Activated CD8-positive, alpha-beta T cell treated with anti-CD3 and anti-CD28 coated beads for 36 hours (primary cell): ENCODE measurements at regions of chr6 and their contacts with region 1.

Region 1: DNA sequence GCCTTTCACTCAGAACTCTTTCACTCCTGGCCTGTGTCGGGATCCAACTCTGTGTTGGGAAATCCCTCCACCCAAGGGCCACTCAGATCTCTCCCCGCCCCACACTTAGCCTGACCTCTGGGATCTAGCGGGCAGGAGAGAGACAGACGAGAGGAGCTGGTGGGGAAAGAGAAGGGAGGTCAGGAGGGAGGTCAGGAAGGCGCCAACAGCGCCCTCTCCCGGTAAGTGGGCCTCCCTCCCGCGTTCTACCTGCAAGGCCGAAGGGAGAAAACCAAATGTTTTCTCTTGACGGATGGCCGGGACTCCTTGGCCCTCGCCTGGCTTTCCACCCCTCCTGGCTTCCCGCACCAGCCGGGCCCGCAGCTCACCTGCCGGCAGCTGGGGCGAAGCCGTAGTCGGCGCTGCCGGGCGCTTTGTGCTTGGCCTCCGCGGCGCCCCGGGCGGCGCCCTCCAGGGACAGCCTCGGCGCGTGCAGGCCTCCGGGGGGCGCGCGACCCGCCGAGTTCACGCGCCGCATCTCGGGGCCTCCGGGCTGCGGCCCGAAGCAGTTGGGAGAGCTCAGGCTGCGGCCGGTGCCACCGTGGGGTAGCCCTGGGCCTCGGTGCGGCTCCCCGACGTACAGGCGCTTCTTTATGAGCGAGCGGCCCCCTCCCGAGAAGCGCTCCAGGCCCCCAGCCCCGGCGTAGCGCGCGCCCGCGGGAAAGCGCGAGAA is 38.2 kb downstream of the C6orf132 start:
- DNase-seq: peak; percentile 86
- ATAC-seq: peak; percentile 76
- H3K4me3 Mint-ChIP-seq: peak overlapping the region; percentile 71
- H3K27ac Mint-ChIP-seq: peak overlapping the region; percentile 78
- H3K4me1 Mint-ChIP-seq: peaks cover 26% of the 10 kb centered on the region
- H3K27me3 Mint-ChIP-seq: no peaks in the 10 kb centered on the region
- CTCF ChIP-seq: peak; percentile 99

Region 2: DNA sequence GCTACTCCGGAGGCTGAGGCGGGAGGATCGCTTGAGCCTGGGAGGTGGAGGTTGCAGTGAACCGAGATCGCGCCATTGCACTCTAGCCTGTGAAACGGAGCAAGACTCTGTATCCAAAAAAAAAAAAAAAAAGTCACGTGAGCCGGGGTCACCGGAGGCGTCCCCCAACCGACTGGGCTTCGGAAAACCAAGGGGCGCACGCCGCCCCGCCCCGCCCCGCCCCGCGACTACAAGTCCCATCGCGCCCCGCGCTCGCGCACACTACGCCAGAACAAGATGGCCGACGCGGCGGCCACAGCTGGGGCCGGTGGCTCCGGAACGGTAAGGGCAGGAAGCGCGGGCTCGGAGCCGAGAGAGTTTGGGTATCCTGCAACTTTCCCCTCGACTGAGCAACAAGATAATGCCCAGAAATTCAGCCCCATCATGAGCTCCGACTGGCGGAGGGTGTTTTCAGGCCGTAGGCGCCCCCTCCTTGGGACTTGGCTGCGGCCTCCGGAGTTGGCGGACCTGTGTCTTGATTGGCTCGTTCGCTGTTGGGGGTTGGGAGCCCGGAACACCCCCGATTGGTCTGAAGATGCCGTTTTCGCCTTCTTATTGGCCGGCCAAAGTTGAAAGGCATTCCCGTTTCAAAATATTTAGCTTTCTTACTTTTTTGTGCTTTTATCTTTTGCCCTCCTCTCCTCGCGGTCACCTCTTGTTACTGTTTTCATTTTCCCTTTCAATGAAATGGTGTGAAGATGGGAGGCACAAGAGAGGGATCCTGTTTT is 53.8 kb before region 1 on chr6 and contains the start of gene TAF8:
- CTCF ChIA-PET with region 1: interaction called, 25 read pairs
- POLR2A ChIA-PET with region 1: interaction called, 3 read pairs
- intact Hi-C with region 1: no loop called
- DNase-seq: peak; percentile 95
- ATAC-seq: peak; percentile 72
- H3K4me3 Mint-ChIP-seq: peak within 1 kb of the TSS; percentile 93
- H3K27ac Mint-ChIP-seq: peak within 1 kb of the TSS; percentile 98
- H3K4me1 Mint-ChIP-seq: peaks cover 65% of the 10 kb centered on the region
- H3K27me3 Mint-ChIP-seq: no peaks in the 10 kb centered on the region
- CTCF ChIP-seq: no peak
- total RNA-seq, gene TAF8: 40.0 to 42.3 TPM

Region 3: GRCh38 chr6:42075159-42075838 is 29.0 kb before region 1 on chr6:
- CTCF ChIA-PET with region 1: interaction called, 22 read pairs
- POLR2A ChIA-PET with region 1: no interaction called
- intact Hi-C with region 1: no loop called
- DNase-seq: peak; percentile 73
- ATAC-seq: no peak
- H3K4me3 Mint-ChIP-seq: no peak overlapping the region
- H3K27ac Mint-ChIP-seq: no peak overlapping the region
- H3K4me1 Mint-ChIP-seq: no peaks in the 10 kb centered on the region
- H3K27me3 Mint-ChIP-seq: no peaks in the 10 kb centered on the region
- CTCF ChIP-seq: peak; percentile 73

Region 4: DNA sequence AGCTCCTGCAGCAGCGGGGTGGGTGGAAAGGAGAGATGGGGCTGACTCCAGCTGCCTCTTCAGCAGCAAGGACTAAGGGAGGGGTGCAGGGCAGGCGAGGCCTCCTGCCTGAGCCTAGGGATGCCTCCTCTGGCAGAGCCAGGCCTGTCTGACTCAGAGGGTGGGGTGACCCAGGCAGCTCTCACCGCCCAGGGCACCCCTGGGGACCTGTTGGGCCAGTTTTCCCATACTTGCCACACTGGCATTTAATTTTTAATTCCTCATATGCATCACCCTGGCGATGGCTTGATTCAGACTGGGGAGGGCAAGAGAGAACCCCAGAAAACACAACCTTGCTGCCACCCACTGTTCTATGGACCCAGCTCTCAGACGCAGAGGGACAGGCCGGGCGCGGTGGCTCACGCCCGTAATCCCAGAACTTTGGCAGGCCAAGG is 18.5 kb after region 1 on chr6:
- CTCF ChIA-PET with region 1: interaction called, 14 read pairs
- POLR2A ChIA-PET with region 1: interaction called, 5 read pairs
- intact Hi-C with region 1: no loop called
- DNase-seq: no peak
- ATAC-seq: no peak
- H3K4me3 Mint-ChIP-seq: no peak overlapping the region
- H3K27ac Mint-ChIP-seq: no peak overlapping the region
- H3K4me1 Mint-ChIP-seq: no peaks in the 10 kb centered on the region
- H3K27me3 Mint-ChIP-seq: no peaks in the 10 kb centered on the region
- CTCF ChIP-seq: no peak

Region 5: DNA sequence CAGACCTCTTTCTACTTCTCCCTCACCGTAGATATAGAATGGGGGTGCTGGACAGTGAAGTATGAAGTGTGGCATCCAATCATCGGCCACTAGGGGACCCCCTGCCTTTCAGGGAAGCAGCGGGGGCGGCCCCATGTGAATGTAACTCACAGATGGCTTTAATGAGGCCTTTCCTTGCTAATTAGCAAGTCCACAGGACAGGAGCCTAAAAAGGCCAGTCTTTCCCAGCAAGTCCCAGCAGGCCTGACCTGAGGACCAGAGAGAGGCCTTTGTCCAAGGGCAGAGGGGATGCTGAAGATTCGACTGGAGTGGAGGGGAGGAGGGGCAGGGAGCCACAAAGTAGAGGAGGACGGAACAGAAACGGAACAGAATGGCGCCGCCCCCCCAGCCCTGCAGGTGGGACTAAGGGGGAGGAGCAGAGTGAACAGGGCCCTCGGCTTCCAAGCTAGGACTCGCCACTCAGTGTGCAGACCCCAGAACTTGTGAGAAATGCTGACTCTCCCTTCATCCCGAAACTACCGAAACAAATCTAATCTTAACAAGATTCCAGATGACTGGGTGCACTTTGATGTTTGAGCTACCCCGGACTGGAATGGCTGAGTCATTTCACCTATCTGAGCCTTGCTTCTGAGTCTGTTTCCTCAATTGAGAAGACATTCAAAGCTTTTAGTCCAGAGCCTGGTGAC is 32.4 kb after region 1 on chr6:
- CTCF ChIA-PET with region 1: interaction called, 20 read pairs
- POLR2A ChIA-PET with region 1: no interaction called
- intact Hi-C with region 1: no loop called
- DNase-seq: peak; percentile 78
- ATAC-seq: peak; percentile 86
- H3K4me3 Mint-ChIP-seq: peak overlapping the region; percentile 37
- H3K27ac Mint-ChIP-seq: peak overlapping the region; percentile 12
- H3K4me1 Mint-ChIP-seq: peaks cover 11% of the 10 kb centered on the region
- H3K27me3 Mint-ChIP-seq: peaks cover 13% of the 10 kb centered on the region
- CTCF ChIP-seq: no peak

Region 6: DNA sequence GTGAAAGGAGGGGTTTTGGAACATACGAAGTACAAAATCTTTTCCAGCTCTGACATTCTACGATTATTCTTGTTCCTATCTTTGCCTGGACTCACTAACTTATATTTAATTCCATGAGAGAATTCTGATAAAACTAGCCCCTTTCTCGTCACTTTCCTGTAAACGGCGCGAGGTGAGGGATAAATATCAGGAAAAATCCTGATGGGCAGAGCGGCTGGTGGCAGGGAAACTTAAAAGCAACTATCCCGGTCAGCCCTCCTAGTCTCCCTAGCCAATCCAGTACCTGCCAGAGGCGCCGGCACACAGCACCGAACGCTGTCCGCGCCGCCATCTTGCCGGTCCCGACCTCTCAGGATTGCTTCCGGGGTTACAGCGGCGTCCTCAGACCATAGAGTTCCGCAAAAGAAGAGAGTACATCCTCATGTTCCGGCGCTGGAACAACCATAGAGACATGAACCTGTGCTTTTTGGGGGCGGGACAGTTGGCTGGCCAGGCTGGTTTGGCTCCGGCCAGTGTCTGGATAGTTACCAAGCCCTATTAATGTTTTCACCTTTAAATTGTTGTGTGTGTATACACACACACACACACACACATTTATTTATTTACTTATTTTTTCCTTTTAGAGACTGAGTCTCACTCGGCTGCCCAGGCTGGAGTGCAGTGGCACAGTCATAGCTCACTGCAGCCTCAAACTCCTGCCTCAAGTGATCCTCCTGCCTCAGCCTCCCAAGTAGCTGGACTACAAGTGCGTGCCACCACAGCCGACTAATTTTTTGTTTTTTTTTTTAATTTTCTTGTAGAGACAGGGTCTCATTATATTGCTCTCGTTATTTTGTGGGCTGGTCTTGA is 113.5 kb after region 1 on chr6 and contains the start of gene MRPS10:
- CTCF ChIA-PET with region 1: interaction called, 14 read pairs
- POLR2A ChIA-PET with region 1: interaction called, 3 read pairs
- intact Hi-C with region 1: no loop called
- DNase-seq: peak; percentile 95
- ATAC-seq: peak; percentile 100
- H3K4me3 Mint-ChIP-seq: peak within 1 kb of the TSS; percentile 100
- H3K27ac Mint-ChIP-seq: peak within 1 kb of the TSS; percentile 97
- H3K4me1 Mint-ChIP-seq: peaks cover 31% of the 10 kb centered on the region
- H3K27me3 Mint-ChIP-seq: no peaks in the 10 kb centered on the region
- CTCF ChIP-seq: no peak
- total RNA-seq, gene MRPS10: 36.7 to 38.9 TPM